ENCODE measurements at regions of chr2 and their contacts with region 1.

Region 1: DNA sequence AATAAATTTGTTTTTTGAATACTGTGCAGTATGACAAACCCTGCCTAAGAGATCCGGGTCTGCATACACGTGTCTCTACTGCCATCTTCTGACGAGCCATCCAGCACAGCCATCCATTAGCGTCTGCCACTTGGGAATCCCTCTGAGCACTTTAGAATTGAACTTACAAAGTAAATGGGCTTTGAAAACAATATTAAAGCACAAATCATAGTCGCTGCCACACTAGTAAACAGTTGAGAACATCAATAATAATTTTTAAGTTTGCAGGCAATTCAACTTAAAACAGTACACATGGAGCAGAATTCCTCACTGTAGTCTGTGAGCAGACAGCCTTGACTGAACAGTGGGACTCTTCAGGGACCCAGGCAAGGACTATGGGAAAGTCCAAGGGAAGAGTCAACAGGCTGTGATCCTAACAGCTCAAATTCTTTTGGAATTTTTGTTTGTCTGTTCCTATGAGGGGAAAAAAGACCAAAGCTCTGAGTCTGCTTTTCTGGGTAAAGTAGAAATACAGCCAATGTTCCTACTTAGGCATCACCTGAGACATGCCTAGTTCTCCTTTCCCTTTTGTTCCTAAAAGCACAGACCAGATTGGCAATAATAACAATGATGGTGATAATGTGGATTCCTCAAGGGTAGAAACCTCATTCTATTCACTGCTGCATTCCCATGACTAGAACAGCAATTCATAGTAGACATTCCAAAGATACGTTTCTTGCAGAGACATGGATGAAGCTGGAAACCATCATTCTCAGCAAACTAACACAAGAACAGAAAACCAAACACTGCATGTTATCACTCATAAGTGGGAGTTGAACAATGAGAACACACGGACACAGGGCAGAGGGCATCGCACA is 92.9 kb downstream of the MREG start:
- DNase-seq: no peak
- ATAC-seq: peak; percentile 71
- H3K4me3 Mint-ChIP-seq: no peak overlapping the region
- H3K27ac Mint-ChIP-seq: no peak overlapping the region
- H3K4me1 Mint-ChIP-seq: peaks cover under 1% of the 10 kb centered on the region
- H3K27me3 Mint-ChIP-seq: peaks cover 15% of the 10 kb centered on the region
- CTCF ChIP-seq: peak; percentile 71

Region 2: GRCh38 chr2:213934560-213934959 is 1985.9 kb before region 1 on chr2:
- CTCF ChIA-PET with region 1: no interaction called
- POLR2A ChIA-PET with region 1: no interaction called
- intact Hi-C with region 1: loop called (anchors 10 kb)
- DNase-seq: no peak
- ATAC-seq: no peak
- H3K4me3 Mint-ChIP-seq: no peak overlapping the region
- H3K27ac Mint-ChIP-seq: no peak overlapping the region
- H3K4me1 Mint-ChIP-seq: no peaks in the 10 kb centered on the region
- H3K27me3 Mint-ChIP-seq: peaks cover 4% of the 10 kb centered on the region
- CTCF ChIP-seq: no peak

Region 3: GRCh38 chr2:214960677-214961076 is 959.8 kb before region 1 on chr2:
- CTCF ChIA-PET with region 1: no interaction called
- POLR2A ChIA-PET with region 1: no interaction called
- intact Hi-C with region 1: loop called (anchors 1 kb)
- DNase-seq: no peak
- ATAC-seq: no peak
- H3K4me3 Mint-ChIP-seq: no peak overlapping the region
- H3K27ac Mint-ChIP-seq: no peak overlapping the region
- H3K4me1 Mint-ChIP-seq: no peaks in the 10 kb centered on the region
- H3K27me3 Mint-ChIP-seq: peaks cover 2% of the 10 kb centered on the region
- CTCF ChIP-seq: no peak

Region 4: DNA sequence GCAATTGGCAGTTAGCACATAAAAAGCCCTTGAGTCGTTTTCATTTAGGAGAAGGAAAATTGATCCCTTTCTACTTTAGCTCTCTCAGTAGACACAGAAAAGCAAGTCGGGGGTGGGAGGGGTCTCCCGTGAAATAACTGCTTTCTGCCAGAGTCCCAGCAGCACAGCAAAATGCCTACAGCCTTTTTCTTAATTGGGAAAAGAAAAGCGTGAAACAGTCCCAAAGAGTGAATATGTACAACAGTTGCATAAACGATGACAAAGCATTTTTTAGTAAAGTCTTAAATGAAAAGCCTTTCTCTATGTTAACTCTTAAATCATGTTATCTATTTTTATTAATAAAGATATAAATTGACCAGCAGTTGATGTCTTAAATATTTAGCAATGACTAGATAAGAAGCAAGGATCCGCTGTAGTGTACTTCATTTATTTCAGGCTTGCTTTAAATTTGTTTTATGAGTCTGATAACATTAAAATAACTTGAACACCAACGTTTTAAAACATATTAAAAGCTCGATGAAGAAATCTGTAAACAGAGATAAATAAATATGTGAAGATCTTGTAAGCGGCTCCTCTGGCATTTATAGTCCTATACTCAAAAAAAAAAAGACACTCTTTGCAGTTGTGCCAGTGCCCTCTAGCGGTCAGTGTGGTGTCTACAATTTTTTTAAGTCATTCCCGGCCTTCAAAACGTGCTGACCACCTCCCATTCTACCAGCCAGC is 650.9 kb before region 1 on chr2:
- CTCF ChIA-PET with region 1: no interaction called
- POLR2A ChIA-PET with region 1: no interaction called
- intact Hi-C with region 1: loop called (anchors 1 kb)
- DNase-seq: no peak
- ATAC-seq: no peak
- H3K4me3 Mint-ChIP-seq: no peak overlapping the region
- H3K27ac Mint-ChIP-seq: no peak overlapping the region
- H3K4me1 Mint-ChIP-seq: no peaks in the 10 kb centered on the region
- H3K27me3 Mint-ChIP-seq: no peaks in the 10 kb centered on the region
- CTCF ChIP-seq: peak; percentile 24

Region 5: DNA sequence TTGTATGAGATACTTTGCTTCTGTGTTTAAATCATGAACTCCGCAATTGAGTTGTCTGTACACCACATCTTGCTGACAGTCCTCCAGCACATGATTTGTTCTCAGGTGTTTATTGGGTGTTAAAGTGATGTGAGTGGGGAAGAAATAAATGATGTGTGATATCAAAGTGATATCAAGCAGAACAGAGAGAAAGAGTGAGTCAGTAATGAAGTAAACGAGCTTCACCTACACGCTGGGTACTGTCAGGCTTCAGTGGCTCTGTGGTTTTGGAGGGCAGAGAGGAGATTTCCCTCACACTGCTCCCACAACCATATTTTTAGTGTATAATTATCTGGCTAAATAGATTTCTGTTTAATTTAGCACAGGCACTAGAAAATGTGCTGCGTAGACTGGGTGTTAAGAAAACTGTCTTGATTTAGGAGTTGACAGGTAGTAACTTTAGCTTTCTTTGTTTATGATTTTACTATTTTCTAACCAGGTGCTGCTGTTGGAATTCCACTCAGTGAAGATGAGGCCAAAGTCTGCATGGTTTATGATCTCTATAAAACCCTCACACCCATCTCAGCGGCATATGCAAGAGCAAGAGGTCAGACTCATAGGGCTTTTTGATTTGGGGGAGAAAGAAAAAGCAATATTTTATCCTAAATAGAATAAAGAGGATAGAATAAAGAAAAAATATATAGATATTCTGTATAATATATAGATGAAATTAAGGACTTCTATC is 587.4 kb before region 1 on chr2:
- CTCF ChIA-PET with region 1: no interaction called
- POLR2A ChIA-PET with region 1: no interaction called
- intact Hi-C with region 1: loop called (anchors 10 kb)
- DNase-seq: no peak
- ATAC-seq: peak; percentile 97
- H3K4me3 Mint-ChIP-seq: peak overlapping the region; percentile 15
- H3K27ac Mint-ChIP-seq: peak overlapping the region; percentile 67
- H3K4me1 Mint-ChIP-seq: peaks cover 14% of the 10 kb centered on the region
- H3K27me3 Mint-ChIP-seq: no peaks in the 10 kb centered on the region
- CTCF ChIP-seq: no peak

Region 6: GRCh38 chr2:215454519-215455246 is 465.8 kb before region 1 on chr2:
- CTCF ChIA-PET with region 1: no interaction called
- POLR2A ChIA-PET with region 1: no interaction called
- intact Hi-C with region 1: loop called (anchors 1 kb)
- DNase-seq: no peak
- ATAC-seq: no peak
- H3K4me3 Mint-ChIP-seq: no peak overlapping the region
- H3K27ac Mint-ChIP-seq: no peak overlapping the region
- H3K4me1 Mint-ChIP-seq: no peaks in the 10 kb centered on the region
- H3K27me3 Mint-ChIP-seq: peaks cover 17% of the 10 kb centered on the region
- CTCF ChIP-seq: peak; percentile 71

Region 7: DNA sequence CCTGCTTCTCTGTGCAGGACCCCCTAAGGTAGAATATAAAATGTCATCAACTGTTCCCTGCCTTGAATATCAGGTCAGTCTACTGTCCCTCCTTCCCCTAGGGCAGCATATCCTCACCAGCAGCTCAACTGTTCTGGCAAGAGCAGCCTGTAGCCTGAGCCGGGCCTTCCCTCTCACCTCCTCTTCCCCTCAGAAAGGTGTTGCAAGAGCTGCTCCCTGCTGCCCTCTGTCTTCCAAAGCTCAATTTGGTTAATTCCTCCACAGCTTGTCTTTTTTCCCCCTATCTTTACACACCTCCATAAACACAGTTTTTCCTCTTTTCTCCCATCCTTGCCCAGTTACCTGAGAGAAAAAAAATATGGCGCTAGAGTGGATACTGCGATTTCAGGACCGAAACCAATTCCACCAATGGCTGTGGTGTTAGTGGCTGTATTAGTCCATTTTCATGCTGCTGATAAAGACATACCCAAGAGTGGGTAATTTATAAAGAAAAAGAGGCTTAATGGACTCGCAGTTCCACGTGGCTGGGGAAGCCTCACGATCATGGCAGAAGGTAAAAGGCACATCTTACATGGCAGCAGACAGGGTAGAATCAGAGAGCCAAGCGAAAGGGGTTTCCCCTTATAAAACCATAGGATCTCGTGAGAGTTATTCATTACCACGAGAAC is 91.8 kb before region 1 on chr2:
- CTCF ChIA-PET with region 1: no interaction called
- POLR2A ChIA-PET with region 1: no interaction called
- intact Hi-C with region 1: loop called (anchors 5 kb)
- DNase-seq: no peak
- ATAC-seq: no peak
- H3K4me3 Mint-ChIP-seq: no peak overlapping the region
- H3K27ac Mint-ChIP-seq: no peak overlapping the region
- H3K4me1 Mint-ChIP-seq: peaks cover 1% of the 10 kb centered on the region
- H3K27me3 Mint-ChIP-seq: peaks cover 4% of the 10 kb centered on the region
- CTCF ChIP-seq: no peak

Region 8: GRCh38 chr2:216362730-216363129 is 442.3 kb after region 1 on chr2:
- CTCF ChIA-PET with region 1: no interaction called
- POLR2A ChIA-PET with region 1: no interaction called
- intact Hi-C with region 1: no loop called
- DNase-seq: no peak
- ATAC-seq: no peak
- H3K4me3 Mint-ChIP-seq: no peak overlapping the region
- H3K27ac Mint-ChIP-seq: no peak overlapping the region
- H3K4me1 Mint-ChIP-seq: no peaks in the 10 kb centered on the region
- H3K27me3 Mint-ChIP-seq: peaks cover 41% of the 10 kb centered on the region
- CTCF ChIP-seq: no peak

Measured in activated B cell treated with CpG ODN at 0.5 μM for 24 hours (primary cell).